ENCODE measurements at regions of chr11 and their contacts with region 1.

Region 1: GRCh38 chr11:129895126-129896041 is at the start of gene NFRKB:
- DNase-seq: peak; percentile 51 to 62 (median 61)
- H3K4me3 ChIP-seq: peak within 1 kb of the TSS; percentile 54 to 89 (median 88)
- H3K4me3 Mint-ChIP-seq: peak within 1 kb of the TSS; percentile 94
- H3K27ac ChIP-seq: peak within 1 kb of the TSS; percentile 18 to 88
- H3K27ac Mint-ChIP-seq: peak within 1 kb of the TSS; percentile 78 to 94 (median 90)
- H3K4me1 ChIP-seq: peaks cover 14 to 23% of the 10 kb centered on the region in 2 donors
- H3K4me1 Mint-ChIP-seq: peaks cover 22% of the 10 kb centered on the region
- H3K27me3 ChIP-seq: no peaks in the 10 kb centered on the region
- H3K27me3 Mint-ChIP-seq: peaks cover 0 to 3% (median 0%) of the 10 kb centered on the region in 3 donors
- CTCF ChIP-seq: no peak
- polyA plus RNA-seq, gene NFRKB: 5.8 to 25.6 (median 9.1) TPM

Region 2: GRCh38 chr11:129279326-129280026 is 615.9 kb before region 1 on chr11:
- intact Hi-C with region 1: loop called in 1 of 2 experiments (anchors 5 kb)
- DNase-seq: peak; percentile 62 to 75 (median 65)
- H3K4me3 ChIP-seq: peak overlapping the region; percentile 67 to 82 (median 69)
- H3K4me3 Mint-ChIP-seq: peak overlapping the region; percentile 82 to 95
- H3K27ac ChIP-seq: peak overlapping the region in 1 of 2 donors; percentile 4
- H3K27ac Mint-ChIP-seq: peak overlapping the region in 3 of 7 donors; percentile 4 to 53 (median 28)
- H3K4me1 ChIP-seq: peaks cover 33 to 34% of the 10 kb centered on the region in 2 donors
- H3K4me1 Mint-ChIP-seq: peaks cover 49% of the 10 kb centered on the region
- H3K27me3 ChIP-seq: peaks cover 11% of the 10 kb centered on the region in 2 donors
- H3K27me3 Mint-ChIP-seq: peaks cover 10 to 25% (median 14%) of the 10 kb centered on the region in 3 donors
- CTCF ChIP-seq: no peak

Region 3: DNA sequence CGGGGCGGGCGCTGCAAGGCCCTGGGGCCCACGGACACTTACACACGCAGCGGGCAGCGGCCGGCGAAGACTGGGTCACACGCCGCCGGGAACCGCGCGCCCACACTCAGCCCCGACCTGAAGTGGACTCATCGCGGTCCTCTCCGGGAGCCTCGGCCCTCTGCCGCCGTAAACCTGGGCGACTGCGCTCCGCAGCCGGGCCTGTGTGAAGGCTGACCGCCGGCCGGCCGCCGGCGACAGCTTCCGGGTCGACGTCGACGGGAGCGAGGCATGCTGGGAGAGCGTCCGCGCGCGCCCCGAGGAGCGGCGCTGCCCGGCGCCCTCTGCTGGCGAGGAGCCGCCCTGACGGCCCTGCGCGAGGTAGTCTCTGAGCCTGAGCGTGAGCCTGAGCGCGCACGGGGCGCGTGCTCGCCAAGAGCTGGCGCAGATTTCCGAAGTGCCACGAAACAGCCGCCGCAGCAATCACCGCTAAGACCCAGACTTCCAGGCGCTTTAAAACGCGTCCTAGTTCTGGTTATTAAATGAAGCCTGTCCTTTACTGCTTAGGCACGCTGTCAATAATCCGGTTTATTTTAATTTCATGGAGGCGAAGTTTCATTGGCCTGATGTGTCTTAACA is 1021.0 kb after region 1 on chr11 and contains the start of gene SNX19:
- intact Hi-C with region 1: loop called in 1 of 2 experiments (anchors 10 kb)
- DNase-seq: peak; percentile 89 to 93 (median 91)
- H3K4me3 ChIP-seq: peak within 1 kb of the TSS; percentile 65 to 80 (median 66)
- H3K4me3 Mint-ChIP-seq: peak within 1 kb of the TSS; percentile 80 to 92
- H3K27ac ChIP-seq: peak within 1 kb of the TSS; percentile 64 to 93
- H3K27ac Mint-ChIP-seq: peak within 1 kb of the TSS; percentile 83 to 96 (median 88)
- H3K4me1 ChIP-seq: peaks cover 14 to 20% of the 10 kb centered on the region in 2 donors
- H3K4me1 Mint-ChIP-seq: peaks cover 29% of the 10 kb centered on the region
- H3K27me3 ChIP-seq: peaks cover 0 to 9% of the 10 kb centered on the region in 2 donors
- H3K27me3 Mint-ChIP-seq: peaks cover 11 to 18% (median 15%) of the 10 kb centered on the region in 3 donors
- CTCF ChIP-seq: peak; percentile 96
- polyA plus RNA-seq, gene SNX19: 13.6 to 23.3 (median 17.6) TPM

Measured in CD14-positive monocyte (primary cell).